Uterus (tissue), 4 donors: ENCODE measurements at regions of chr22 and their contacts with region 1.

Region 1: DNA sequence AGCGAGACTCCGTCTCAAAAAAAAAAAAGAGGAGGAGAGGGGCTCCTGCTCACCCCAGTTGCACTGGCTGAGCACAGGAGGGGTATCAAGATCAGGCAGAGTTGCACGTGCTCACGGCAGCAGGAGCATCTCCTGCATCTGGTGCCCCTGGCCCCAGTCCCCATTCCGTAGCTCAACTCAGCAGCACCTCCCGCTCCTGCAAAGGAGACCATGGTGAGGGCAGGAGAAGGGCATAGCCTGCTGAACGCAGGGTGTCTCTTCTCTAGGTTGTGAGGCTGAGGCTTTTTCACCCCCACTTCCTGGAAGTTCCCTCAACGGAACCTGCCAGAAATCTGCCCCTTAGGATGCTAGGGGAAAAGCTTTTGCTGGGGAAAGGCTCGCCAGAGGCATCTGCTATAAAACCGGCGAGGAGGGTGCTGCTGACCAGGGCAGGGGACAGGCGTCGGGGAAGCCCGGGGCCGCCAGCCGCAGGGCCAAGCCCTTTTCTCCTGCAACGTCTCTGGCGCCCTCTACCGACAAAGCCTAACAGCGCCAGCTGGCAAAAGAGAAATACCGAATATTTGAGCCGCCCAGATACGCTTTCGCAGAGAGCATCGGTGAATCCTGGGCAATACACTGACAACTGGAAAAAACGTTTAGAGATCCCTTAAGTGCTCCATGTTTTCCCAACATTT is 1.0 kb upstream of the PPP6R2 start:
- DNase-seq: peak; percentile 88 to 90
- H3K4me3 ChIP-seq: peak overlapping the region; percentile 73 to 91
- H3K27ac ChIP-seq: peak overlapping the region; percentile 88 to 96
- H3K4me1 ChIP-seq: no peaks in the 10 kb centered on the region
- H3K27me3 ChIP-seq: no peaks in the 10 kb centered on the region
- CTCF ChIP-seq: peak; percentile 95 to 99 (median 97)
- POLR2A ChIP-seq: no peak

Region 2: GRCh38 chr22:50250555-50251476 is 91.3 kb before region 1 on chr22 and contains the start of gene HDAC10:
- intact Hi-C with region 1: loop called (anchors 5 kb)
- DNase-seq: peak; percentile 66 to 78
- H3K4me3 ChIP-seq: peak within 1 kb of the TSS; percentile 39 to 45
- H3K27ac ChIP-seq: peak within 1 kb of the TSS; percentile 70 to 77
- H3K4me1 ChIP-seq: peaks cover 6 to 16% of the 10 kb centered on the region in 2 donors
- H3K27me3 ChIP-seq: no peaks in the 10 kb centered on the region
- CTCF ChIP-seq: no peak
- POLR2A ChIP-seq: peak in 1 of 2 donors; percentile 33
- total RNA-seq, gene HDAC10: 1.2 to 40.5 (median 20.6) TPM

Region 3: DNA sequence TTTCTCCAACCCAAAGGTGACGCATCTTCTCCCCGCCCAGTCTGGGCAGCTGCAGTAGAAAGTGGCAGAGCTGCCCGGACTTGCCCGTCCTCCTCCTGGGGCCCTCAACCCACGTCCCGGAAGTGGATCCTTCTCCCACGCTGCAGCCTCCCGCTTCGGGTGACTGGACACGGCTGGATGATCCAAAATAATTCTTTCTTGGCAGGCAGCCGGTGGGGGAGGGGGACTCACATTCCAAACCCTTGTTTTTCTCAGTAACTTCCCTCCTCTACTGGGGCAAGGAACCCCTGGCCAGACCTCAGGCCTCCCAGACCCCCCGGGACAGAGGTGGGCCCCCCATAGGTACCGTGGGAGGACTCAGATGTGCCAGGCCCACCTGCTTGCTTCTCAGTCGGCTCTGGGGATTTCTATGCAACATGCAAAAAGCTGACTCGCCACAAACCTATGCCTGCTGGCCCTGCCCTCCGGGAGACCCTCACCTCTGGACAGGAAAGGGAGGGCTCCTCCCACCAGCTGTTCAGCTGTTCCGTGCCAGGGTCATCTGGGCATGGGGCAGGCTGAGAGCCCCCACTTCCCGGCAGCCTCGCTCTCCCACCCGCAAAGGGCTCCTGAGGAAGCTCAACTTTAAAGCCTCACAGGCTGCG is 36.1 kb before region 1 on chr22:
- intact Hi-C with region 1: no loop called
- DNase-seq: peak; percentile 86 to 89
- H3K4me3 ChIP-seq: peak overlapping the region; percentile 61 to 95
- H3K27ac ChIP-seq: peak overlapping the region; percentile 88 to 94
- H3K4me1 ChIP-seq: peaks cover 21 to 63% of the 10 kb centered on the region in 2 donors
- H3K27me3 ChIP-seq: no peaks in the 10 kb centered on the region
- CTCF ChIP-seq: no peak
- POLR2A ChIP-seq: no peak

Region 4: GRCh38 chr22:50417411-50418210 is 75.5 kb after region 1 on chr22:
- intact Hi-C with region 1: no loop called
- DNase-seq: no peak
- H3K4me3 ChIP-seq: no peak overlapping the region
- H3K27ac ChIP-seq: no peak overlapping the region
- H3K4me1 ChIP-seq: no peaks in the 10 kb centered on the region
- H3K27me3 ChIP-seq: no peaks in the 10 kb centered on the region
- CTCF ChIP-seq: no peak
- POLR2A ChIP-seq: no peak

Region 5: DNA sequence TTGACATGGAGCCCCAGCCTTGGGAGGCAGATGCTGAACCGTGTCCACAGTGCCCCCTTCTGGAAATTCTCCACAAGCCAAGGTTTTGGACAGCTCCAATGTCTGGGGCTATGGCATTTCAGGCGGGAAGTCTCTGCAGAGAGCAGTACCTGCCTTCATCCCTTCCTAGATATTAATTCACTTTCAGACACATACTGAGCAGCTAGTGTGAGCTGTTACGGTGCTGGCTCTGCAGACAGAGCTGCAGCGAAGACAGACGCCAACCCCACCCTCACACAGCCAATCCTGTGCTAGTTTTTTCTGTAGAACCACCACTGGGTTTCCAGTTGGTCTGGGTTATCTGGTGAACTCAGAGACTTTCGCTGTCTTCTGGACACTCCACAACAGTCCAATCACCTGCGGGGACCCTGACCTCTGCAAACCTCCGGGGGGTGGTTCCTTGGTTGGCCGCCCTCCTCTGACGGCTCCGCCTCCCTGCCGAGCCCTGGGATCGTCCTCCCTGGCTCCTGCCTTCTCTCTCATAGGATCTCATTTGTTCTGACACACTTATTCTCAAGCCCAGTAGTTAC is 156.3 kb after region 1 on chr22:
- intact Hi-C with region 1: no loop called
- DNase-seq: no peak
- H3K4me3 ChIP-seq: no peak overlapping the region
- H3K27ac ChIP-seq: no peak overlapping the region
- H3K4me1 ChIP-seq: no peaks in the 10 kb centered on the region
- H3K27me3 ChIP-seq: no peaks in the 10 kb centered on the region
- CTCF ChIP-seq: peak; percentile 24 to 50 (median 34)
- POLR2A ChIP-seq: no peak